ENCODE measurements at regions of chr16 and their contacts with region 1.

Region 1: GRCh38 chr16:77675464-77676324 is 46.6 kb upstream of the NUDT7 start:
- DNase-seq: peak; percentile 11 to 35
- ATAC-seq: peak in 1 of 2 donors; percentile 73
- H3K4me3 ChIP-seq: no peak overlapping the region
- H3K27ac ChIP-seq: no peak overlapping the region
- H3K4me1 ChIP-seq: no peaks in the 10 kb centered on the region
- H3K27me3 ChIP-seq: no peaks in the 10 kb centered on the region
- CTCF ChIP-seq: peak; percentile 76 to 93 (median 85)
- POLR2A ChIP-seq: no peak

Region 2: GRCh38 chr16:77579351-77579891 is 96.3 kb before region 1 on chr16:
- in situ Hi-C with region 1: no loop called
- intact Hi-C with region 1: no loop called
- DNase-seq: no peak
- ATAC-seq: no peak
- H3K4me3 ChIP-seq: no peak overlapping the region
- H3K27ac ChIP-seq: no peak overlapping the region
- H3K4me1 ChIP-seq: no peaks in the 10 kb centered on the region
- H3K27me3 ChIP-seq: no peaks in the 10 kb centered on the region
- CTCF ChIP-seq: no peak
- POLR2A ChIP-seq: no peak

Region 3: GRCh38 chr16:77971306-77972271 is 295.9 kb after region 1 on chr16:
- in situ Hi-C with region 1: loop called (anchors 5 to 10 kb)
- intact Hi-C with region 1: loop called (anchors 1 kb)
- DNase-seq: peak; percentile 26 to 31
- ATAC-seq: peak; percentile 39 to 52
- H3K4me3 ChIP-seq: no peak overlapping the region
- H3K27ac ChIP-seq: no peak overlapping the region
- H3K4me1 ChIP-seq: no peaks in the 10 kb centered on the region
- H3K27me3 ChIP-seq: no peaks in the 10 kb centered on the region
- CTCF ChIP-seq: peak; percentile 46 to 73 (median 63)
- POLR2A ChIP-seq: no peak

Region 4: GRCh38 chr16:78002915-78003538 is 327.3 kb after region 1 on chr16:
- in situ Hi-C with region 1: no loop called
- intact Hi-C with region 1: loop called (anchors 1 kb)
- DNase-seq: peak; percentile 31 to 61
- ATAC-seq: peak; percentile 58 to 65
- H3K4me3 ChIP-seq: no peak overlapping the region
- H3K27ac ChIP-seq: no peak overlapping the region
- H3K4me1 ChIP-seq: no peaks in the 10 kb centered on the region
- H3K27me3 ChIP-seq: no peaks in the 10 kb centered on the region
- CTCF ChIP-seq: peak; percentile 36 to 72 (median 63)
- POLR2A ChIP-seq: no peak

Measured in gastrocnemius medialis (tissue), 4 donors.